ENCODE measurements at regions of chr7 and their contacts with region 1.

Region 1: GRCh38 chr7:100586266-100587025 is at the start of gene FBXO24:
- DNase-seq: peak; percentile 99
- ATAC-seq: peak; percentile 87
- H3K4me3 ChIP-seq: peak within 1 kb of the TSS; percentile 71 to 87
- H3K27ac ChIP-seq: peak within 1 kb of the TSS; percentile 97
- H3K4me1 ChIP-seq: peaks cover 2 to 22% of the 10 kb centered on the region in 2 experiments; a peak in 3 of 4 replicates
- H3K27me3 ChIP-seq: no peaks in the 10 kb centered on the region
- CTCF ChIP-seq: no peak
- POLR2A ChIP-seq: no peak
- RAD21 ChIP-seq: no peak
- total RNA-seq, gene FBXO24: 2.1 TPM

Region 2: DNA sequence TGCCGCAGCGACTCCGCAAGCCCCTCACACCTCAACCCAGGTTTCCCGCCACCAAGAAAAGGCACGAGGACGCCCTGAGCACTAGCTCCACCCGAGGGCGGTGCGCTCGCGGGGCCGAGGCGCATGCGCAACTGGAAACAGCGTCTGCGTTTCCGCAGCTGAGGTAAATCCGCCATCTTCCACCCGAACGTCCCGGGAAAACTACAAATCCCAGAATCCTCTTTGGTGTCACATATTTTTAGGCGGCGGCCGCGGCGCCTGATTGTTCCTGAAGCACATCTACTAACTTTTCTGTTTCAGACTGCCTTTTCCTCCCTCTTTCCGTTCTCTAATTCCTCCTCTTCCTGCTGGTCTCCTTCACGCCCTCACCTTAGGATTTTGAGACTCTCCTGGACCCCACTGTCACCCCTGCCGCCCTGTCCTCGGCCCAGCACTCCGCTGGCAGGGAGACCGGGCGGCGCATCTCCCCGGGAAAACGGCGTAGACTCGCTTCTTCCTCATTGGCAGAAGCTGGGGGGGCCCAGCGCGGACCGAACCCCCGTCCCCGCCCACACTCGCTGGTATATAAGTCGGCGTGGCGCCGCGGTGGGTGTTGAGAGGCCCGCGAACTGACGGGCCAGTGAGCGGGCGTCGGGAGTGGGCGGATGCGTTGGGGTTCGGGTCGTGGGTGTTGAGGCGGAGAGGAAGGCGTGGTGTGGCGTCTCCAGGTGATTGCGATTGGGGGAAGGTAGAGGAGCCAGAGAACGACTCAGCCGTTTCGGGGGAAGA is 158.1 kb before region 1 on chr7 and contains the start of gene ZCWPW1:
- CTCF ChIA-PET with region 1: no interaction called
- POLR2A ChIA-PET with region 1: interaction called, 15 read pairs
- RAD21 ChIA-PET with region 1: no interaction called
- intact Hi-C with region 1: no loop called
- DNase-seq: peak; percentile 97
- ATAC-seq: peak; percentile 65
- H3K4me3 ChIP-seq: peak within 1 kb of the TSS; percentile 82 to 85
- H3K27ac ChIP-seq: peak within 1 kb of the TSS; percentile 99
- H3K4me1 ChIP-seq: peaks cover 0 to 45% of the 10 kb centered on the region in 2 experiments
- H3K27me3 ChIP-seq: no peaks in the 10 kb centered on the region
- CTCF ChIP-seq: no peak
- POLR2A ChIP-seq: peak; percentile 99
- RAD21 ChIP-seq: no peak
- total RNA-seq, gene ZCWPW1: 1.5 TPM

Region 3: GRCh38 chr7:100545360-100546128 is 40.9 kb before region 1 on chr7:
- CTCF ChIA-PET with region 1: no interaction called
- POLR2A ChIA-PET with region 1: interaction called, 10 read pairs
- RAD21 ChIA-PET with region 1: interaction called in 1 of 2 experiments, 4 read pairs
- intact Hi-C with region 1: no loop called
- DNase-seq: peak; percentile 81
- ATAC-seq: peak; percentile 94
- H3K4me3 ChIP-seq: peak overlapping the region; percentile 22 to 38
- H3K27ac ChIP-seq: peak overlapping the region; percentile 95
- H3K4me1 ChIP-seq: peaks cover 50 to 56% of the 10 kb centered on the region in 2 experiments
- H3K27me3 ChIP-seq: no peaks in the 10 kb centered on the region
- CTCF ChIP-seq: no peak
- POLR2A ChIP-seq: no peak
- RAD21 ChIP-seq: no peak

Region 4: DNA sequence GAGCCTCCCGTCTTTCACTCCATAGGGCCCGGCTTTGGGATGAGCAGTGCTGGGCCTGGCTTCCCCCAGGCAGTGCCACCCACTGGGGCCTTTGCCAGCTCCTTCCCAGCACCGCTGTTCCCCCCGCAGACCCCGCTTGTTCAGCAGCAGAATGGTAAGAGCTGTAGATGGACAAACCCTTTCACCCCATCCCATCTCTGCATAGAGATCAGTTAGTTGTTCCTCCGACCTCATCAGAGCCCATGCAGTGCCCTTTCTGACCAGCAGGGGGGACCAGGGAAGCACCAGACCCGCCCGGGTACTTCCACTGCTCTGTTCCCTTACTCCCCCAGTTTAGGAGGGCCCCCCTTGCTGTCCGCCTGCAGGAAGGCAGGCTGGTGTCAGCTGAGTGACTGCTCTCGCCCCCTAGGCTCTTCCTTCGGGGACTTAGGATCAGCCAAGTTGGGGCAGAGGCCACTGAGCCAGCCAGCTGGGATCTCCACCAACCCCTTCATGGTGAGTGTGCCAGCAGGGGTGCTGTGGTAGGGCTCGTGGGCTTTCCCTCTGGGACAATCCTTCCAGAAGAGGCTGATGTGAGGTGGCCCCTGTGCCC is 22.5 kb before region 1 on chr7:
- CTCF ChIA-PET with region 1: interaction called, 11 read pairs
- POLR2A ChIA-PET with region 1: interaction called, 6 read pairs
- RAD21 ChIA-PET with region 1: interaction called in 1 of 2 experiments, 5 read pairs
- intact Hi-C with region 1: no loop called
- DNase-seq: no peak
- ATAC-seq: peak; percentile 80
- H3K4me3 ChIP-seq: no peak overlapping the region
- H3K27ac ChIP-seq: no peak overlapping the region
- H3K4me1 ChIP-seq: peaks cover 0 to 20% of the 10 kb centered on the region in 2 experiments; a peak in 1 of 4 replicates
- H3K27me3 ChIP-seq: no peaks in the 10 kb centered on the region
- CTCF ChIP-seq: peak; percentile 81 to 99 (median 93)
- POLR2A ChIP-seq: no peak
- RAD21 ChIP-seq: peak; percentile 83

Region 5: GRCh38 chr7:100604028-100604975 is 17.9 kb after region 1 on chr7:
- CTCF ChIA-PET with region 1: interaction called, 3 read pairs
- POLR2A ChIA-PET with region 1: interaction called, 10 read pairs
- RAD21 ChIA-PET with region 1: interaction called in 1 of 2 experiments, 3 read pairs
- intact Hi-C with region 1: no loop called
- DNase-seq: no peak
- ATAC-seq: peak; percentile 84
- H3K4me3 ChIP-seq: peak overlapping the region; percentile 64 to 72
- H3K27ac ChIP-seq: peak overlapping the region; percentile 77
- H3K4me1 ChIP-seq: peaks cover 4 to 50% of the 10 kb centered on the region in 2 experiments
- H3K27me3 ChIP-seq: no peaks in the 10 kb centered on the region
- CTCF ChIP-seq: peak in 2 of 3 experiments; percentile 37 to 45; a peak in 4 of 6 replicates
- POLR2A ChIP-seq: no peak
- RAD21 ChIP-seq: no peak

Region 6: DNA sequence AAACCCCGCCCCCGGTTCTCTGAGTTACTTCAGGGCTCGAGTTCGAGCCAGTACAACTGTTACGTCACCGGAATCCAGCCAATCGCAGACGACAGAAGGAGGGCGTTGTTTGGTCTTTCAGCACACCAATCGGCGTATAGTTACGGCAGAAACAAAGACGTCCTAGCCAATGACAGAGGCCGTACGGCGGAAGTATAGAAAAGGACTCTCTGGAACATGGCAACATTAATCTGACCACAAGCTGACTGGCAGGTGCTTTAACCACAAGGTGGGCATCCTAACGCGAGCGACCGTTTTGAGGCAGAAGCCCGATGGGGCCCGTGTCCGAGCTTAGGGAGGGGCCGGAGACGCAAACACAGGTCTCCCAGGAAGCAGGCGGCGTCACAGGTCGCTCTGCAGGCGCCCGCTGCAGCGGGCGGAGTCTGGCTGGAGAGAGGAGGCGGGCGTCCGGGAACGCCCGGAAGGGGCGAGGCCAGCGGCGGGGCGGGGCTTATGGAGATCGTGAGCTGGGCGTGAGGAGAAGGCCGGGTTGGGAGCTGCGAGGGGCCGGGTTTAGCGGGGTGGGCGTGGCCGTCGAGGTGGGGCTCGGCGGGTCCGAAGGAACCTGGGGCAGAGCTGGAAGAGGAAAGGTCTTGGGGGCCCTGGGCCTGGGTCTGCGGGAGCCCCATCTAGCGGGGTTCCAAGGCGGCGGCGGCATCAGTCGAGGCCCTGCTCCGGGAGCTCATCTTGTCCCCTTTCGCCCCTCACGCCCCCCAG is 25.7 kb after region 1 on chr7 and contains the start of gene MOSPD3:
- CTCF ChIA-PET with region 1: interaction called, 12 read pairs
- POLR2A ChIA-PET with region 1: interaction called, 23 read pairs
- RAD21 ChIA-PET with region 1: interaction called, 3 read pairs
- intact Hi-C with region 1: no loop called
- DNase-seq: peak; percentile 99
- ATAC-seq: peak; percentile 97
- H3K4me3 ChIP-seq: peak within 1 kb of the TSS; percentile 73 to 89
- H3K27ac ChIP-seq: peak within 1 kb of the TSS; percentile 89
- H3K4me1 ChIP-seq: peaks cover 3 to 27% of the 10 kb centered on the region in 2 experiments
- H3K27me3 ChIP-seq: no peaks in the 10 kb centered on the region
- CTCF ChIP-seq: no peak
- POLR2A ChIP-seq: peak; percentile 59
- RAD21 ChIP-seq: no peak
- total RNA-seq, gene MOSPD3: 32.8 TPM

Region 7: DNA sequence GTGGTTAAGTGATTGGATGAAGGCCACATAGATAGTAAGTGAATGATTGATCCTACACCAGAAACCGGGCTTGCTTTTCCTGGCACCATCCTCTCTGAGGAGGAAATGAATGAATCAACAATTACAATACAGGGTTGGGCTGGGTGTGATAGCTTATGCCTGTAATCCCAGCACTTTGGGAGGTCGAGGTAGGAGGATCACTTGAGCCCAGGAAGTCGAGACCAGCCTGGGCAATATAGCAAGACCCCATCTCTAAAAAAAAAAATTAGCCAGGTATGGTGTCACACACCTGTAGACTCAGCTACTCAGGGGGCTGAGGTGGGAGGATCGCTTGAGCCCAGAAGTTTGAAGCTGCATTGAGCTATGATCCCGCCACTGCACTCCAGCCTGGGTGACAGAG is 887.7 kb after region 1 on chr7:
- CTCF ChIA-PET with region 1: no interaction called
- POLR2A ChIA-PET with region 1: no interaction called
- RAD21 ChIA-PET with region 1: no interaction called
- intact Hi-C with region 1: no loop called
- DNase-seq: no peak
- ATAC-seq: no peak
- H3K4me3 ChIP-seq: no peak overlapping the region
- H3K27ac ChIP-seq: no peak overlapping the region
- H3K4me1 ChIP-seq: no peaks in the 10 kb centered on the region
- H3K27me3 ChIP-seq: no peaks in the 10 kb centered on the region
- CTCF ChIP-seq: no peak
- POLR2A ChIP-seq: no peak
- RAD21 ChIP-seq: no peak